ENCODE measurements at regions of chr7 and their contacts with region 1.

Region 1: GRCh38 chr7:39948956-39949928 is 814 bp upstream of the CDK13 start:
- DNase-seq: peak; percentile 99
- H3K4me3 ChIP-seq: peak overlapping the region; percentile 84 to 94 (median 92)
- H3K27ac ChIP-seq: peak overlapping the region; percentile 92 to 100 (median 98)
- H3K4me1 ChIP-seq: peaks cover 0 to 26% (median 20%) of the 10 kb centered on the region in 4 donors
- H3K27me3 ChIP-seq: no peaks in the 10 kb centered on the region
- CTCF ChIP-seq: no peak
- EP300 ChIP-seq: peak in 1 of 4 donors; percentile 39
- POLR2A ChIP-seq: peak; percentile 79 to 87

Region 2: DNA sequence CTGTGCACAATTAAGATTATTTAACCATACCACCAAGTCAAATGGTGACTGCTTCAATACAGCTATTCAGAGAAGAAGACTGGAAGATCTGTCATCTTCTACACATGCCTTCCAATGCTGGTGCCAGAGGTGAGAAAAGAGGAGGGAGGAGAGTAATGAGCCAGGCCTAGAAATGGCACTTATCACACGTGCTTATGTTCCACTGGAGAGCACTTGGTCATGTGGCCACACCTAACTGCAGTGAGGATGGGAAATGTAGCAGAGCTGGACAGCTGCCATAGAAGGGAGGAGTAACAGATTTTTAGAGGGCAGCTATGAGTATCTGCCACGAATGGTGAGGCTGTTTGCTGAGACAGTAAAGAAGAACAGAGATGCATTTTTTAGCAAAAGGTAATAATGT is 108.0 kb after region 1 on chr7:
- intact Hi-C with region 1: loop called (anchors 2 kb)
- DNase-seq: no peak
- H3K4me3 ChIP-seq: no peak overlapping the region
- H3K27ac ChIP-seq: no peak overlapping the region
- H3K4me1 ChIP-seq: peaks cover 0 to 16% (median 1%) of the 10 kb centered on the region in 4 donors
- H3K27me3 ChIP-seq: no peaks in the 10 kb centered on the region
- CTCF ChIP-seq: no peak
- EP300 ChIP-seq: no peak
- POLR2A ChIP-seq: no peak

Region 3: GRCh38 chr7:40134428-40135316 is 185.4 kb after region 1 on chr7 and contains the starts of genes MPLKIP and SUGCT:
- intact Hi-C with region 1: loop called (anchors 2 kb)
- DNase-seq: peak; percentile 93
- H3K4me3 ChIP-seq: peak within 1 kb of the TSS; percentile 71 to 93 (median 86)
- H3K27ac ChIP-seq: peak within 1 kb of the TSS; percentile 83 to 93 (median 90)
- H3K4me1 ChIP-seq: peaks cover 3 to 41% (median 30%) of the 10 kb centered on the region in 4 donors
- H3K27me3 ChIP-seq: no peaks in the 10 kb centered on the region
- CTCF ChIP-seq: peak; percentile 86 to 99 (median 91)
- EP300 ChIP-seq: no peak
- POLR2A ChIP-seq: peak; percentile 47 to 55
- total RNA-seq, gene MPLKIP: 26.9 to 43.1 (median 31.8) TPM
- total RNA-seq, gene SUGCT: 2.3 to 14.0 (median 4.2) TPM

Measured in sigmoid colon (tissue), 7 donors.